PC-9 (cell line): ENCODE measurements at regions of chr12 and their contacts with region 1.

Region 1: DNA sequence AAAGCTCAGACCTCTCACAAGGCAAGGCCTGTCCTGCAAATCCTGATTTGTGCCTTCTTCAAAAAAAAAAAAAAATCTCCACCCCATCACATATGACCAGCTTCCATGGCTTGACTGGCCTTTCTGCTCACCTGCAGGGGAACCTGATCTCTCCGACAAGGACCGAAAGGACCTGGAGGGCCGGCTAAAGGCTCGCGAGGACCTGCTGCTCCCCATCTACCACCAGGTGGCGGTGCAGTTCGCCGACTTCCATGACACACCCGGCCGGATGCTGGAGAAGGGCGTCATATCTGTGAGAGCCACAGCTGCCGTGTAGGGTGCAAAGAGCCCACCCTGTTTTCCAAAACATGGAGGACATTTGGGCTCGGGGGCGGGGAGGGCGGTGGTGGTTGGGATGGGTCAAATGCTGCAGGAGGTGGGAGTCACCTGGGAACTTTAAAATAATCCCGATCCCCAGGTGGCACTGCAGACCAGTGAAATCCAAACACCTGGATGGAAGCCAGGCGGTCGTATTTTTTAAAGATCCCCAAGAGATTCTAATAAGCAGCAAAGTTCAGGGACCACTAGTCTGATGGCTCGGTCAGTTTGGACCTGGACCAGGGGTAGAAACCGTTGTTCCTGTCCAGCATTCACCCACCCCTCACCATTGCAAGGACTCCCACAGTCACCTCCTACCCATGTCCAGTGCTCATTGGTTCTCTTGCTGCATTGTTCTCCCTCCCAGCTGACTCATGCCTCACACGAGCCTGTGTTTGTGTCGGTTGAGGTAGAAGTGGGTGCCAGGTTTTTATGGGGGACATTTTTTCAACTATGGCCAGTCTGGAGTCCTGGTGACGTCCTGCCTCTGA is 44.8 kb downstream of the FOXN4 start:
- DNase-seq: peak; percentile 61 to 78
- H3K4me3 ChIP-seq: no peak overlapping the region
- H3K27ac ChIP-seq: no peak overlapping the region
- H3K4me1 ChIP-seq: no peaks in the 10 kb centered on the region
- H3K27me3 ChIP-seq: no peaks in the 10 kb centered on the region
- CTCF ChIP-seq: peak; percentile 93

Region 2: GRCh38 chr12:109110988-109111495 is 153.3 kb before region 1 on chr12:
- CTCF ChIA-PET with region 1: no interaction called
- POLR2A ChIA-PET with region 1: no interaction called
- intact Hi-C with region 1: loop called (anchors 5 kb)
- DNase-seq: peak in 1 of 2 experiments; percentile 61
- H3K4me3 ChIP-seq: no peak overlapping the region
- H3K27ac ChIP-seq: no peak overlapping the region
- H3K4me1 ChIP-seq: no peaks in the 10 kb centered on the region
- H3K27me3 ChIP-seq: no peaks in the 10 kb centered on the region
- CTCF ChIP-seq: no peak

Region 3: GRCh38 chr12:109385339-109386067 is 121.2 kb after region 1 on chr12:
- CTCF ChIA-PET with region 1: interaction called, 16 read pairs
- POLR2A ChIA-PET with region 1: no interaction called
- intact Hi-C with region 1: loop called (anchors 1 kb)
- DNase-seq: peak; percentile 6 to 52
- H3K4me3 ChIP-seq: no peak overlapping the region
- H3K27ac ChIP-seq: no peak overlapping the region
- H3K4me1 ChIP-seq: no peaks in the 10 kb centered on the region
- H3K27me3 ChIP-seq: peaks cover 9% of the 10 kb centered on the region
- CTCF ChIP-seq: peak; percentile 80

Region 4: DNA sequence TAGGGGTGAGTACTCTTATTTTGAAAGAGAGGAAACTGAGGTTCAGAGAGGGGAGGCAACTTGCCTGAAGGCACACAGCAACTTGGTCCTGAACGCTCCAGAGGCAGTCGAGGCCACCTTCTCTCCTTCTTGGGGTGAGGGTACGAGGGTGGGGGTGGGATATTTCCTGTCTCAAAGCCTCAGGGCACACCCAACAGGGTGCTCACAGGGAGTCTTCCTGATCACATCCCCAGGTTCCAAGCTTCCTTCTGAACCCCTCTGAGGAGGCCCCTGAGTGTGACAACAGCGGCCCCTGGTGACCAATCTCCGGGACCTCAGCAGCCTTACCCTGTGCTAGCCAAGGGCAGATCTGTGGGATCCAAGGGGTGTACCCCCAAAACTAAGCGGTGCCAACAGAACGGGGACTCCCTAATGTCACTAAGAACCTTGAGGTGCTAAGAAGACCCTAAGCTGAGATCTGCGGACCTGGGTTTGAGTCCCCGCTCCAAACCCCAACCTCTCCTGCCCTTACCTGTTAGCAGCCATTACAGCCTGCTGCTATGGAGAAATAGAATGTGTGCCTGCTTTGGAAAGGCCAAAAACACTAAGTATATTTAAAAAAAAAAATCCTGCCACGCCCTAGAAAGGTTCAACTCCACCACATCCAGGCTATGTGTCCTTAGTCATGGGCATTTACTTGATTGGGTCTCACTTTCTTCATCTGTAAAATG is 511.0 kb after region 1 on chr12:
- CTCF ChIA-PET with region 1: no interaction called
- POLR2A ChIA-PET with region 1: no interaction called
- intact Hi-C with region 1: loop called (anchors 5 kb)
- DNase-seq: peak; percentile 57 to 68
- H3K4me3 ChIP-seq: no peak overlapping the region
- H3K27ac ChIP-seq: no peak overlapping the region
- H3K4me1 ChIP-seq: peaks cover 26% of the 10 kb centered on the region
- H3K27me3 ChIP-seq: no peaks in the 10 kb centered on the region
- CTCF ChIP-seq: peak; percentile 91

Region 5: GRCh38 chr12:109818905-109819500 is 554.7 kb after region 1 on chr12:
- CTCF ChIA-PET with region 1: no interaction called
- POLR2A ChIA-PET with region 1: no interaction called
- intact Hi-C with region 1: no loop called
- DNase-seq: peak in 1 of 2 experiments; percentile 82
- H3K4me3 ChIP-seq: no peak overlapping the region
- H3K27ac ChIP-seq: no peak overlapping the region
- H3K4me1 ChIP-seq: peaks cover 26% of the 10 kb centered on the region
- H3K27me3 ChIP-seq: no peaks in the 10 kb centered on the region
- CTCF ChIP-seq: no peak